Activated CD4-positive, alpha-beta memory T cell treated with anti-CD3 and anti-CD28 coated beads for 36 hours (primary cell): ENCODE measurements at regions of chr13 and their contacts with region 1.

Region 1: DNA sequence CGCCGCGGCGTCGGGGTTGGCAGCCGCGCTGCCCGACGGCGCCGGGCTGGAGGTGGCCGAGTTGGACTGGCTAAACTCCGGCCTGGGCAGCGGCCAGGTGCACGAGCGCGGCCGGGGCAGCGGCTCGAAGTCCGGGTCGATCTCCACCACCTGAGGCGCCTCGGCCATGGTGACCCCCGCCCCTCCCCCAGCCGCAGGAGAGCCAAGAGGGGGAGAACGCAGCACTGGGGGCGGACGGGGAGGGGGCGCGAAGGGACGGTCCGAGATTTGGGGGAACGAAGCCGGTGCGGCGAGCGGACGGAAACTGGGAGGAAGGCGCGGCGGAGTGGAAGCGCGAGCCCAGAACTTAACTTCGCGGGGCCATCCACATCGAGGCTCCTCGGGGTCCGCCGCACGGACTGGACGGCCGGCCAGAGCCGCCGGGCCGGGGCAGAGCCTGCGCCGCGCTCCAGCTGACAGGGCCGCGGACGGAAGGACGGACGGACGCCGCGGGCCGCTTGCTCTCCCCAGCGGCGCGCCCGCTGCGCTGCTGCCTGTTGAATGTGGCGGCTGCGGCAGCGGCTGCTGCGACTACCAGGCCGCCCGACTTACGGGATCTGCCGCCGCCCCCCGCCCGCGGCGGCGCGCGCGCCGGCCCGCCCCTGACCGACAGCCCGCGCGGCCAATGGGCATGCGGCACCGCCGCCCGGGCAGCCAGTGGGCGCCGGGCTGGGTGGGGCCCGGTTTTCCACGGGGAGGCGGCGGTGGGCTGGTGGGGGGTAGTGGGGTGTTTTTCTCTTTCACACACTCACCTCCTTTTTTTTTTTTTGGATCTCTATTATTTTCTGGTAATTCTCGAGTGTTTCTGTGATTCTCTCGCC is at the start of gene FOXO1:
- DNase-seq: peak; percentile 91
- H3K4me3 Mint-ChIP-seq: peak within 1 kb of the TSS; percentile 91
- H3K27ac Mint-ChIP-seq: peak within 1 kb of the TSS; percentile 96
- H3K4me1 Mint-ChIP-seq: peaks cover 34% of the 10 kb centered on the region
- H3K27me3 Mint-ChIP-seq: no peaks in the 10 kb centered on the region
- total RNA-seq, gene FOXO1: 34.2 to 34.5 TPM

Region 2: DNA sequence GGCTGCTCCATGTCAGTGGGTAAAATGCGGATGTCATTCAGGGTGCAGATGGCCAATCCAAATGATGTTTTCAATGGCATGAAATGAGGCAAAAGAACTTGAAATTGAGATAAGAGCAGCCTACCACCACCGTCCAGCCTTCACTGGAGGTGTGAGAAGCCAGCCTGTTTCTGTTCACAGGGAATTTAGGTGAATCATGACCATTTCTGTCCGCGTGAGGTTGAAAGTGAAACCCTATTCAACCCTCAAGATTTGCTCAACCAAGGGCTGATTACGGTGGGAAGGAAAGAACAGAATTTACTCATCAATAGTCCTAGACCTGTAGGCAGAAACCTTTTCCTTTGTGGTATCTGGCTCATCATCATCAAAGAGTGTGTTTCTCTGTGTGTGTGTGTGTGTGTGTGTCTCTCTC is 640.1 kb before region 1 on chr13:
- CTCF ChIA-PET with region 1: no interaction called
- POLR2A ChIA-PET with region 1: no interaction called
- intact Hi-C with region 1: loop called (anchors 1 kb)
- DNase-seq: peak; percentile 82
- H3K4me3 Mint-ChIP-seq: peak overlapping the region; percentile 3
- H3K27ac Mint-ChIP-seq: peak overlapping the region; percentile 83
- H3K4me1 Mint-ChIP-seq: peaks cover 44% of the 10 kb centered on the region
- H3K27me3 Mint-ChIP-seq: peaks cover 5% of the 10 kb centered on the region

Region 3: GRCh38 chr13:40190641-40191100 is 475.6 kb before region 1 on chr13:
- CTCF ChIA-PET with region 1: no interaction called
- POLR2A ChIA-PET with region 1: interaction called, 6 read pairs
- intact Hi-C with region 1: loop called (anchors 5 kb)
- DNase-seq: peak; percentile 79
- H3K4me3 Mint-ChIP-seq: peak overlapping the region; percentile 9
- H3K27ac Mint-ChIP-seq: peak overlapping the region; percentile 85
- H3K4me1 Mint-ChIP-seq: peaks cover 66% of the 10 kb centered on the region
- H3K27me3 Mint-ChIP-seq: no peaks in the 10 kb centered on the region

Region 4: GRCh38 chr13:40438999-40439797 is 227.1 kb before region 1 on chr13:
- CTCF ChIA-PET with region 1: interaction called, 4 read pairs
- POLR2A ChIA-PET with region 1: no interaction called
- intact Hi-C with region 1: loop called (anchors 5 kb)
- DNase-seq: peak; percentile 42
- H3K4me3 Mint-ChIP-seq: peak overlapping the region; percentile 59
- H3K27ac Mint-ChIP-seq: peak overlapping the region; percentile 71
- H3K4me1 Mint-ChIP-seq: peaks cover 34% of the 10 kb centered on the region
- H3K27me3 Mint-ChIP-seq: no peaks in the 10 kb centered on the region

Region 5: DNA sequence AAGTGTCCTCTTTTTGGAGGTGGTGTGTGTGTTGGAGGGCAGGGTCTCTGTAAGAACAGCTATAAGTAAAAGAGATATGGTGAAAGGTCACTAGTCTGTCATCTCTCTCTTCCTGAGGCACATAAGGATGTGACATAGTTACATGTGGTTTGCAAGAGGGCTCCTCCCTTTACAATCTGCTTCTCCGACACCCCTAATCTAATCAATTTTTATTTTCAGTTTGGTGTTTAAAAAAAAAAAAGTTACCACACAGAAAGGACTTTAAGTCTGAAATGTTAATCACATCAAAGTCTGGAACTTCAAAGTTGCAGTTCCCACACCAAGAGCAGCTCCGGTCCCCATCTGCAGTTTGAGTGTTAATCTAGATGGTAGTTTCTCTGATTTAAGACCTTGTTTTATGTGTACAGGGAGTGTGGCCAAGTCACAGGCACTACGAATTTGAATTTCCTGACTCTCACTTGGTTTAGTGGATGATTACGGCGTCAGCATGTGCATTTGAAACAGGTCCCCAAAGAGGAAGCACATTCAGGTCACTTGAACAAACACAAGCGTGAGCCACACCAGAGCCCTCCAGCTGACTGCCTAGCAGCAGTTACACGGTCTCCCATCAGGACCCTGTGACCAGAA is 53.0 kb before region 1 on chr13:
- CTCF ChIA-PET with region 1: no interaction called
- POLR2A ChIA-PET with region 1: interaction called, 28 read pairs
- intact Hi-C with region 1: loop called (anchors 1 kb)
- DNase-seq: peak; percentile 77
- H3K4me3 Mint-ChIP-seq: peak overlapping the region; percentile 74
- H3K27ac Mint-ChIP-seq: peak overlapping the region; percentile 97
- H3K4me1 Mint-ChIP-seq: peaks cover 92% of the 10 kb centered on the region
- H3K27me3 Mint-ChIP-seq: no peaks in the 10 kb centered on the region

Region 6: DNA sequence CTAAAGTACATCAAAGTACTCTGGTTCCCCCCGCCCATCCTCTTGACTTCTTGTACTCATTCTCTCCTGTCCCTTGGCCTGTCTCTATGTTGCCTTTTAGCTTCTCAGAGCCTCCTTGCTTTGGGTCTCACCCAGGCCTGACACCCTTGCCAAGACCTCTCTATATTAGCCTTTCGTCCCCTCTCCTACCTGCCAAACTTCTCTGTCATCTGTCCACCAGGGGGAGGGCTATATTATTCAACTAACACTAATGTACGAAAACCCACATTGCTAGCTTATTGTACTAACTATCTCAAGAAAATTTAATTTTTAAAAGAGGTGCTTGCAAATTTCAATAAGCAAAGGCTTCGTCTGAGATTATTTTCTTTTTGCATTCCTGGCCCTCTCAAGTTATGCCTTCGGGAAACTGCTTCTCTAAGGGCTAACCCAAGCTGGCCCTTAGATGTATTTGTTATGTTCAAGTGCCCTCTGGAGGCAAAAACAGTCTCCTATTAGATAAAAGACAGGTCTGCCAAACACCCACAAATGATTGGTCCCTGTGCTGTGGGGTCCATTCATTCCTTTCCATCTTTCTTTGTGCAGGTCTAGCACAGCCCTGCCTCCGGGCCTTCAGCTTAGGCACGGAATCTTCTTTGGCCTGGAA is 111.0 kb after region 1 on chr13:
- CTCF ChIA-PET with region 1: interaction called, 6 read pairs
- POLR2A ChIA-PET with region 1: no interaction called
- intact Hi-C with region 1: loop called (anchors 2 kb)
- DNase-seq: peak; percentile 58
- H3K4me3 Mint-ChIP-seq: peak overlapping the region; percentile 64
- H3K27ac Mint-ChIP-seq: peak overlapping the region; percentile 96
- H3K4me1 Mint-ChIP-seq: peaks cover 30% of the 10 kb centered on the region
- H3K27me3 Mint-ChIP-seq: no peaks in the 10 kb centered on the region